ENCODE measurements at regions of chr11 and their contacts with region 1.

Region 1: DNA sequence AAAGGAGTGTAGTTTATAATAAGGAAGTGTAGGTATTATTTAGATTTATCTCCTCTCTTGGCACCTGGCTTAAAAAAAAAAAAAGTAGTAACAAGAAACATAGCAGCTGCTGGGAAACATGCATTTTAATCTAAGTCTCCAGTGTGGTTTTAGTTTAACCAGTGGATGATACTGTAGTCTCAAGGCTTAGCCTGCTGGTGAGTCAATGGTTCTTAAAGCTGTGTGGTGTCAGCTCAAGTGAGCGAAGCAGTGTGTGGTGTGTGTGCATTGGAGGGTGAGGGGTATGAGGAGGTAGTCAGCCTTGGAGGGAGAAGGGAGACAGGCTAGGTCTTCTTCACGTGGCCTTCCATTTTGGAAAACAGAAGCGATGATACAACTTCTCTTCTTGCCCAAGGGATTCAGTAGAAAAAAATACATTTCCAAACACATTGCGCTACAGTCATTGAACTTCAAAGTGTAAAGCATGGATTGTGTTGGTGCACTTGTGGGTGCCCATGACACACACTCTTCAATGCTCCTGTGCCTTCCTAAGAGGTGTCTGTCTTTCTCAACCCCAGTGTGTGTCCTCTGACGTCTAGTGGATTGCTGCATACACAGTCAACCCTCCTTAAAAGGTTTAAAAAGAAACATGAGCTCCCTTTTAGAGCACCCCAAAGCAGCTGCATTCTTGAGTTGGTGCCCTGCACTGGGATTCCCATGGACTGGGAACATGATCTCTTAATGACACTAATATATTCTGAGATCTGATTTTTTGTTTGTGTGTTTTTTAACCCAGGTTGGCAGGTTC is 40.1 kb downstream of the ZBTB16 start:
- DNase-seq: no peak
- H3K4me3 Mint-ChIP-seq: no peak overlapping the region
- H3K27ac Mint-ChIP-seq: no peak overlapping the region
- H3K4me1 Mint-ChIP-seq: peaks cover 52% of the 10 kb centered on the region
- H3K27me3 Mint-ChIP-seq: peaks cover 19% of the 10 kb centered on the region

Region 2: GRCh38 chr11:114060392-114061350 is 38.9 kb before region 1 on chr11:
- intact Hi-C with region 1: loop called (anchors 5 kb)
- DNase-seq: no peak
- H3K4me3 Mint-ChIP-seq: peak overlapping the region; percentile 81
- H3K27ac Mint-ChIP-seq: no peak overlapping the region
- H3K4me1 Mint-ChIP-seq: peaks cover 11% of the 10 kb centered on the region
- H3K27me3 Mint-ChIP-seq: peaks cover 73% of the 10 kb centered on the region

Region 3: DNA sequence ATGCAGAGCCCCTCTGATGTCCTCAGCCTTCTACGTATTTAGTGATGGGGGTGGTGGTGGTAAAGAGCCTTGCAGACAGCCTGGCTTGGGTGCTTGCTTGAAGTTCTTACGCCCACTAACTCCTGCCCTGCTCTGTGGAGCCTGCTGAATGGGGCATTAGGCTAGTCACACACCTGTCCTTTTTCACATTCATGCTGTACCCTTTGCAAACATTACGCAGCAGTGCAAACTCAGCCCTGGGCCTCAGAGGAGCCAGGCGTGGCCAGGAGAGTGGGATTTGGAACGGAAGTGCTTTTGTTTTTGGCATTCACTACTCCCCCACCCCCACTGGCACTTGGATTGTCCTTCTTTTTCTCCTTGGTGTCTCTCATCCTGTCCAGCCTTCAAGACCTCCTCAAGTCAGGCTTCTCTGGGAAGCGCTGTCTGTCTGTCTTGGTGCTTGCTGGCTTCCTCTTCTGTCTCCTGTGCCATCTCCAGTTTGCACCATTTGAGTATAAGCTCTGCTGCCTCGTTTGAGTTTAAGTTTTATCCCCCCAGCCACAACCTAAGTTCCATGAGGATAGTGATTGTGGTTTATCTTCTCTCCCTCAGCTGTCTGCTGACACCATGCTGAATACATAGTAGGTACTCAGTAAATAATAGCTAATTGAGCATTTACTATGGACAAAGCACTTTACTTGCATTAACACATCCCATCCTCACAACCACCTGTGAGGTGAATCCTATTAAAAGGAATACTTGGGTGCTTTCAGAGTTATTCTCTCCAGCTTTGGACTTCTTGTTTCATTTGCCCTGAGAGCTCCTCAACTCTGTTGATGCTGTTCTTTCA is 13.4 kb before region 1 on chr11:
- intact Hi-C with region 1: loop called (anchors 2 kb)
- DNase-seq: no peak
- H3K4me3 Mint-ChIP-seq: no peak overlapping the region
- H3K27ac Mint-ChIP-seq: no peak overlapping the region
- H3K4me1 Mint-ChIP-seq: peaks cover 35% of the 10 kb centered on the region
- H3K27me3 Mint-ChIP-seq: peaks cover 23% of the 10 kb centered on the region

Region 4: DNA sequence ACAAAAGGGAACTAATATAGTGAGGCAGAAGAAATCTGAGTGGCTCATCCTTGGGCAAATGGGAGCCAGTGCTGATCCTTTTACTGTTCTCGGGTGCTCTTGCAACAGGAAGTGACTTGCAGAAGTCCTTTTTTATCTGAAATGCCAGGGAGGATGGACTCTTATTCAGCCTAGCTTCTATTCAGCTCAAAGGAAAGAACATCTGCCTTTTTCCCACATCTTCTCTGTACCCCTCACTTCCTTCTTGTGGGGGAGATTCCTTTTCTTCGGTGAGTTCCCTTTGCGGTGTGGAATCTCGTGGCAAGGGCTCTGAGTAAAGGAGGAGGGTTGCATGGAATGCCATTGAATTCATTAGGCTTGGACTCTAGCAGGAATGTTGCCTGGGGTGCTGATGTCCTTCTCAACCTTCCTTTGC is 36.2 kb after region 1 on chr11:
- intact Hi-C with region 1: no loop called
- DNase-seq: no peak
- H3K4me3 Mint-ChIP-seq: no peak overlapping the region
- H3K27ac Mint-ChIP-seq: no peak overlapping the region
- H3K4me1 Mint-ChIP-seq: peaks cover 26% of the 10 kb centered on the region
- H3K27me3 Mint-ChIP-seq: peaks cover 17% of the 10 kb centered on the region

Region 5: GRCh38 chr11:114159802-114160632 is 60.4 kb after region 1 on chr11:
- intact Hi-C with region 1: loop called (anchors 10 kb)
- DNase-seq: peak; percentile 90
- H3K4me3 Mint-ChIP-seq: peak overlapping the region; percentile 53
- H3K27ac Mint-ChIP-seq: peak overlapping the region; percentile 78
- H3K4me1 Mint-ChIP-seq: peaks cover 50% of the 10 kb centered on the region
- H3K27me3 Mint-ChIP-seq: no peaks in the 10 kb centered on the region